ENCODE measurements at regions of chr7 and their contacts with region 1.

Region 1: GRCh38 chr7:18489624-18490023 is 5.9 kb upstream of the HDAC9 start:
- DNase-seq: no peak
- ATAC-seq: no peak
- H3K4me3 ChIP-seq: no peak overlapping the region
- H3K4me3 Mint-ChIP-seq: no peak overlapping the region
- H3K27ac ChIP-seq: no peak overlapping the region
- H3K27ac Mint-ChIP-seq: no peak overlapping the region
- H3K4me1 ChIP-seq: peaks cover 1 to 12% of the 10 kb centered on the region in 2 donors
- H3K4me1 Mint-ChIP-seq: peaks cover 30% of the 10 kb centered on the region
- H3K27me3 ChIP-seq: no peaks in the 10 kb centered on the region
- H3K27me3 Mint-ChIP-seq: no peaks in the 10 kb centered on the region
- CTCF ChIP-seq: no peak

Region 2: GRCh38 chr7:18421297-18422002 is 68.2 kb before region 1 on chr7:
- CTCF ChIA-PET with region 1: no interaction called
- POLR2A ChIA-PET with region 1: no interaction called
- intact Hi-C with region 1: no loop called
- DNase-seq: peak; percentile 9
- ATAC-seq: no peak
- H3K4me3 ChIP-seq: no peak overlapping the region
- H3K4me3 Mint-ChIP-seq: no peak overlapping the region
- H3K27ac ChIP-seq: no peak overlapping the region
- H3K27ac Mint-ChIP-seq: no peak overlapping the region
- H3K4me1 ChIP-seq: peaks cover 4% of the 10 kb centered on the region in 2 donors
- H3K4me1 Mint-ChIP-seq: peaks cover 19% of the 10 kb centered on the region
- H3K27me3 ChIP-seq: no peaks in the 10 kb centered on the region
- H3K27me3 Mint-ChIP-seq: no peaks in the 10 kb centered on the region
- CTCF ChIP-seq: no peak

Region 3: DNA sequence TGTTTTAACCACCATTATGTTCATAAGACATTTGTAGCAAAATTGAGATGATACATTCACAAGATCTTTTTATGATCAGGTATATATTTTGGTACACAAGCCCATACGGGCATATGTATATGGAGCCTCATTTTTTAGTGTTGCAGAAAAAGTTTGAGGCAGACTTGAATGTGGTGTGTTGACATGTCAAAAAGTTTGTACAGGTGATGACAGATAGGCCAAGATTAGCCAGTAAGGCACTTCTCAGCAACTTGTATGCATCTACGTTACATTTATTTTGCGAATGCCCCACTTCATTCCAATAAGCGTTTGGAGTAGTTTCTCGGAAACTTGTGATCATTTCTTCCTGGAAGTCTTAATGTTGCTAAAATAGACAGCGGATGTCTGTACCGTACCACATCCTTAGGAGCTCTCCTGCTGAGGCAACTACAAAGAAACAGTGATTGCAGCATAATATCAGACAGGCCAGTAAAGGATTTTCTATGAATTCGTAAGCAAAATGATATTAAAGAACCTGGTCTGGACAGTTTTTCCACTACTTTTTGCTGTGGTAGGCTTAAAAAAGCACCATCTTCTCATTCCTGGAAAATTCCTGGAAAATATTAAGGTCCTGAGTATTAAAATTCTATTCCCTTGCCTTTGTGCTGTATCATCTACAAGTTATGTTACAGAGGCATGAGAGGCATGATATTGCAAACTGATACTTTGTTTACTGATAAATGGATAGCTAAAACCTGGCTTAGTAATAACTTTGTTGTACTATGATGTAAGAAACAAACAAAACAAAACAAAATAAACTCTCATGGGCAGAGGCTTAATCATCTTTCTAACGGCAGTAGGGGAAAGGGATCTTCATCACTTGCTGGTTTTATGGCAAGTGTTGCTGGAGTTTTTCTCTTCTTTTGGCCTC is 159.5 kb after region 1 on chr7:
- CTCF ChIA-PET with region 1: no interaction called
- POLR2A ChIA-PET with region 1: interaction called, 11 read pairs
- intact Hi-C with region 1: no loop called
- DNase-seq: no peak
- ATAC-seq: no peak
- H3K4me3 ChIP-seq: no peak overlapping the region
- H3K4me3 Mint-ChIP-seq: no peak overlapping the region
- H3K27ac ChIP-seq: no peak overlapping the region
- H3K27ac Mint-ChIP-seq: no peak overlapping the region
- H3K4me1 ChIP-seq: no peaks in the 10 kb centered on the region
- H3K4me1 Mint-ChIP-seq: no peaks in the 10 kb centered on the region
- H3K27me3 ChIP-seq: no peaks in the 10 kb centered on the region
- H3K27me3 Mint-ChIP-seq: no peaks in the 10 kb centered on the region
- CTCF ChIP-seq: no peak